OCI-LY7 (cell line): ENCODE measurements at regions of chr10 and their contacts with region 1.

Region 1: GRCh38 chr10:71285180-71285545 is 33.9 kb upstream of the SLC29A3 start:
- DNase-seq: peak; percentile 65
- H3K4me3 ChIP-seq: no peak overlapping the region
- H3K27ac ChIP-seq: no peak overlapping the region
- H3K4me1 ChIP-seq: no peaks in the 10 kb centered on the region
- CTCF ChIP-seq: peak; percentile 86

Region 2: GRCh38 chr10:70903262-70903921 is 381.8 kb before region 1 on chr10:
- CTCF ChIA-PET with region 1: no interaction called
- POLR2A ChIA-PET with region 1: no interaction called
- intact Hi-C with region 1: loop called (anchors 1 kb)
- DNase-seq: peak; percentile 43
- H3K4me3 ChIP-seq: no peak overlapping the region
- H3K27ac ChIP-seq: no peak overlapping the region
- H3K4me1 ChIP-seq: no peaks in the 10 kb centered on the region
- CTCF ChIP-seq: peak; percentile 90

Region 3: GRCh38 chr10:70925377-70926225 is 359.6 kb before region 1 on chr10:
- CTCF ChIA-PET with region 1: no interaction called
- POLR2A ChIA-PET with region 1: no interaction called
- intact Hi-C with region 1: loop called (anchors 1 kb)
- DNase-seq: peak; percentile 38
- H3K4me3 ChIP-seq: no peak overlapping the region
- H3K27ac ChIP-seq: no peak overlapping the region
- H3K4me1 ChIP-seq: no peaks in the 10 kb centered on the region
- CTCF ChIP-seq: peak; percentile 89